Caco-2 (cell line): ENCODE measurements at regions of chr4 and their contacts with region 1.

Region 1: GRCh38 chr4:121736735-121737351 is 28.1 kb downstream of the SMIM43 start:
- DNase-seq: peak; percentile 47 to 70
- H3K4me3 ChIP-seq: no peak overlapping the region
- H3K4me3 Mint-ChIP-seq: no peak overlapping the region
- H3K27ac Mint-ChIP-seq: no peak overlapping the region
- H3K4me1 ChIP-seq: no peaks in the 10 kb centered on the region
- H3K4me1 Mint-ChIP-seq: peaks cover 9% of the 10 kb centered on the region
- H3K27me3 ChIP-seq: no peaks in the 10 kb centered on the region
- H3K27me3 Mint-ChIP-seq: peaks cover 3% of the 10 kb centered on the region
- CTCF ChIP-seq: peak; percentile 49 to 57

Region 2: GRCh38 chr4:121370729-121371325 is 366.0 kb before region 1 on chr4:
- CTCF ChIA-PET with region 1: interaction called, 5 read pairs
- POLR2A ChIA-PET with region 1: no interaction called
- intact Hi-C with region 1: loop called (anchors 1 kb)
- DNase-seq: peak in 1 of 2 experiments; percentile 43
- H3K4me3 ChIP-seq: no peak overlapping the region
- H3K4me3 Mint-ChIP-seq: no peak overlapping the region
- H3K27ac Mint-ChIP-seq: no peak overlapping the region
- H3K4me1 ChIP-seq: no peaks in the 10 kb centered on the region
- H3K4me1 Mint-ChIP-seq: no peaks in the 10 kb centered on the region
- H3K27me3 ChIP-seq: no peaks in the 10 kb centered on the region
- H3K27me3 Mint-ChIP-seq: peaks cover 9% of the 10 kb centered on the region
- CTCF ChIP-seq: peak; percentile 51 to 52

Region 3: DNA sequence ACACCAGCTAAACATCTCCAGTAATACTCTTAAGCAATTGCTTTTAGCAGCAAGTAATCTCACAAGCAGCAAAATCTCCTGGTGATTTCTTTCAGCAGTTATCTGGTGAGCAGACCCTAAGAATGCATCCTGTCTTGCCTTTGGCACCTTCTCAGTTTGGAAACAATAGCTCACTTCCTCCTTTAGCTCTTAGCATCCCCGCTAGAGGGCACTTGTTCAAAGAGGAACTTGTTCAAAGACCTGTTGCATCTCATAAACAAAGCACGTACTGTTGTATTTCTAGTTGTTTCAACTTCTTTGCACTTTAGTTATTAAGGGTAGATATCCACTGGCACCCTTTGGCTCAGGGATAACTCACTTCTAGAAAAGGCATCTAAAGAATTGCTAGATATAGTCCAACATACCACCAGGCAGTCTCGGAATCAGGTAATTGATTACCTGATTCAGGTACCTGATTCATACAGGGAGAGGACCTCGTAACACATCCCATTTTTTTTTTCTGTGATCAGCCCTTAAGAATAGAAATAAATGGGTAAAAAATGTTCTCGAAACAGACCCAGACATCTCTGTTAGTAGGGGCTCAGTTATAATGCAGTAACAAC is 274.1 kb before region 1 on chr4:
- CTCF ChIA-PET with region 1: interaction called, 13 read pairs
- POLR2A ChIA-PET with region 1: no interaction called
- intact Hi-C with region 1: loop called (anchors 1 kb)
- DNase-seq: peak; percentile 50 to 62
- H3K4me3 ChIP-seq: no peak overlapping the region
- H3K4me3 Mint-ChIP-seq: no peak overlapping the region
- H3K27ac Mint-ChIP-seq: no peak overlapping the region
- H3K4me1 ChIP-seq: no peaks in the 10 kb centered on the region
- H3K4me1 Mint-ChIP-seq: no peaks in the 10 kb centered on the region
- H3K27me3 ChIP-seq: no peaks in the 10 kb centered on the region
- H3K27me3 Mint-ChIP-seq: peaks cover 2% of the 10 kb centered on the region
- CTCF ChIP-seq: peak; percentile 60 to 77

Region 4: GRCh38 chr4:121648516-121648915 is 88.3 kb before region 1 on chr4:
- CTCF ChIA-PET with region 1: no interaction called
- POLR2A ChIA-PET with region 1: no interaction called
- intact Hi-C with region 1: no loop called
- DNase-seq: no peak
- H3K4me3 ChIP-seq: no peak overlapping the region
- H3K4me3 Mint-ChIP-seq: no peak overlapping the region
- H3K27ac Mint-ChIP-seq: no peak overlapping the region
- H3K4me1 ChIP-seq: peaks cover 11% of the 10 kb centered on the region; the same call in 1 of the 2 replicates
- H3K4me1 Mint-ChIP-seq: peaks cover 3% of the 10 kb centered on the region
- H3K27me3 ChIP-seq: no peaks in the 10 kb centered on the region
- H3K27me3 Mint-ChIP-seq: no peaks in the 10 kb centered on the region
- CTCF ChIP-seq: no peak

Region 5: GRCh38 chr4:121950212-121950679 is 213.4 kb after region 1 on chr4:
- CTCF ChIA-PET with region 1: no interaction called
- POLR2A ChIA-PET with region 1: no interaction called
- intact Hi-C with region 1: no loop called
- DNase-seq: peak; percentile 83 to 91
- H3K4me3 ChIP-seq: peak overlapping the region; percentile 61
- H3K4me3 Mint-ChIP-seq: peak overlapping the region; percentile 80
- H3K27ac Mint-ChIP-seq: no peak overlapping the region
- H3K4me1 ChIP-seq: peaks cover 3% of the 10 kb centered on the region; the same call in 1 of the 2 replicates
- H3K4me1 Mint-ChIP-seq: no peaks in the 10 kb centered on the region
- H3K27me3 ChIP-seq: no peaks in the 10 kb centered on the region
- H3K27me3 Mint-ChIP-seq: peaks cover 18% of the 10 kb centered on the region
- CTCF ChIP-seq: peak; percentile 77 to 83